K562 (cell line): ENCODE measurements at regions of chr3 and their contacts with region 1.

Region 1: DNA sequence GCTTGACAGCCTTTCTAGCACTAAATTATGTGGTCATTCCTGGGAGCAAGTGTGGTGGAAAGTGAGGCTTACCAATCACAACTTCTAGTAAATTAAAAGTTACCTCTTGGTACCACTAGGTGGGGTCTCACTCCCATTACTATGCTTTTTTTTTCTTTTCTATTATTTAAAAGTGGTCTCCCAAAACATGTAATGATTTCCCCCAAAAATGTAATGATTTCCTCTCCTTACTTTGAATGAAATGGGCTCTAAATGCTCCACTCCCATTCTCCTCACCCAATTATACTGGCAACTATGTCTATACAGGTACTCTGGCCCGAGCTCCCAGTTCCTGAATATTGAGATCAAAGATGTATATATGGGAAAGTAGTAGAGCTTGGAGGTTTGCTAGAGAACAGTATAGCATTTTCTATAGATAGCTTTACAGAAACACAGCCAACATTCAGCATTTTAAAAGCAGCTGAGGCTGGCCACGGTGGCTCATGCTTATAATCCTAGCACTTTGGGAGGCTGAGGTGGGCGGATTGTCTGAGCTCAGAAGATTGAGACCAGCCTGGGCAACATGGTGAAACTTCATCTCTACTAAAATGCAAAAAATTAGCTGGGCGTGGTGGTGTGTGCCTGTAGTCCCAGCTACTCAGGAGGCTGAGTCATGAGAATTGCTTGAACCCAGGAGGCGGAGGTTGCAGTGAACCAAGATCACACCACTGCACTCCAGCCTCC is 70.9 kb downstream of the DCUN1D1 start:
- DNase-seq: peak; percentile 33 to 45 (median 36)
- ATAC-seq: peak; percentile 54
- H3K4me3 ChIP-seq: no peak overlapping the region
- H3K27ac ChIP-seq: no peak overlapping the region
- H3K4me1 ChIP-seq: peaks cover 7 to 23% of the 10 kb centered on the region in 2 experiments
- H3K27me3 ChIP-seq: no peaks in the 10 kb centered on the region
- CTCF ChIP-seq: peak; percentile 18 to 65 (median 55); a peak in 5 of 6 replicates
- EP300 ChIP-seq: no peak
- POLR2A ChIP-seq: no peak
- RAD21 ChIP-seq: peak; percentile 35 to 63

Region 2: GRCh38 chr3:182843478-182843877 is 66.0 kb before region 1 on chr3:
- CTCF ChIA-PET with region 1: no interaction called
- POLR2A ChIA-PET with region 1: no interaction called
- in situ Hi-C with region 1: no loop called
- intact Hi-C with region 1: no loop called
- DNase-seq: no peak
- ATAC-seq: no peak
- H3K4me3 ChIP-seq: no peak overlapping the region
- H3K27ac ChIP-seq: no peak overlapping the region
- H3K4me1 ChIP-seq: no peaks in the 10 kb centered on the region
- H3K27me3 ChIP-seq: no peaks in the 10 kb centered on the region
- CTCF ChIP-seq: no peak
- EP300 ChIP-seq: no peak
- POLR2A ChIP-seq: no peak
- RAD21 ChIP-seq: no peak

Region 3: GRCh38 chr3:182920515-182921084 is 11.1 kb after region 1 on chr3:
- CTCF ChIA-PET with region 1: no interaction called
- POLR2A ChIA-PET with region 1: interaction called, 14 read pairs
- in situ Hi-C with region 1: no loop called
- intact Hi-C with region 1: no loop called
- DNase-seq: peak; percentile 70 to 96 (median 78)
- ATAC-seq: peak; percentile 97
- H3K4me3 ChIP-seq: peak overlapping the region; percentile 11; the same call in 1 of the 2 replicates
- H3K27ac ChIP-seq: peak overlapping the region; percentile 97
- H3K4me1 ChIP-seq: peaks cover 0 to 46% of the 10 kb centered on the region in 2 experiments; a peak in 4 of 5 replicates
- H3K27me3 ChIP-seq: no peaks in the 10 kb centered on the region
- CTCF ChIP-seq: no peak
- EP300 ChIP-seq: peak; percentile 93; the same call in 1 of the 2 replicates
- POLR2A ChIP-seq: peak; percentile 64
- RAD21 ChIP-seq: peak in 1 of 2 experiments; percentile 10; a peak in 1 of 4 replicates

Region 4: DNA sequence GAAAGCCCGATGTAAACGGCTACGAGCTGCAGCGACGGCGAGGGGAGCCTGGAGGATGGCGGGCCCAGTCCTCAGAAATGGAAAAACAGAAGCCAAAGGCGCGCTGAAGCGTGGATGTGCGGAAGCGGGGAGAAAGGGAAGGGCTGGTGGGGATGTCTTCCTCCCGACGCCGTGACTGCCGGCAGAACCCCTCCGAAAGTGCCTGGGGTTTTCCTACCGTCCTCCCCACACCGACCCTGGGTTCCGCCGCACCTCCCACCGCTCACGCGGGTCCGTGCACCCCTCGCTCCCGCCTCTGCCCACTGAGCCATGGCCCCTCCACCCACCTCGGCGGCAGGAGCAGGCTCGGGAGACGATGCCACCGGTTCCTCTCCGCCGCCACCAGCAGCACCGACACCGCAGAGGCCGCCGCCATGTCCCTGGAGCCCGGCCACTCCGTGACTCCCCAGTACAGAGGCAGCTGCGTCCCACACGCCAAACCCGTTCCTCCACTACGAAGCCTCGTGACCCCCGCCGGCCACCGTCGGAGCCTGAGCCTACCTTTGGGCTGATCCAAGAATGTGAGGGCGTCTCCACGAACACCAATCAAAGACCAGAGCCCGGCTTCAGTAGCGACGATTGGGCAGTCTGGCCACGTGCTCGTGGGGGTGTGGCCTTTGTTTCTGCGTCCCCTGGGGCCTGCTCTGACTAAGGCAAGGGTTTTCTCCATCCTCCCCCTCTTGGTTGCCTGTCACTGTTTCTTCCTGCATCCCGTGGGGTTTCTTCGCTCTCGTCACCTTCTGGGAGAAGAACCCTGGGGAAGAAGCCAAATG is 189.8 kb after region 1 on chr3 and contains the start of gene MCCC1:
- CTCF ChIA-PET with region 1: no interaction called
- POLR2A ChIA-PET with region 1: no interaction called
- in situ Hi-C with region 1: no loop called
- intact Hi-C with region 1: loop called (anchors 10 kb)
- DNase-seq: peak; percentile 98 to 99 (median 98)
- ATAC-seq: peak; percentile 100
- H3K4me3 ChIP-seq: peak within 1 kb of the TSS; percentile 83
- H3K27ac ChIP-seq: peak within 1 kb of the TSS; percentile 75
- H3K4me1 ChIP-seq: peaks cover 5 to 13% of the 10 kb centered on the region in 2 experiments; a peak in 4 of 5 replicates
- H3K27me3 ChIP-seq: no peaks in the 10 kb centered on the region
- CTCF ChIP-seq: no peak
- EP300 ChIP-seq: peak; percentile 30; the same call in 1 of the 2 replicates
- POLR2A ChIP-seq: peak; percentile 89
- RAD21 ChIP-seq: 0 out of 4 replicates have a peak, but pooled peaks of 1 of the 2 experiments have one; percentile 4
- polyA plus RNA-seq, gene MCCC1: 13.7 to 14.3 TPM

Region 5: GRCh38 chr3:183114384-183115178 is 205.1 kb after region 1 on chr3:
- CTCF ChIA-PET with region 1: no interaction called
- POLR2A ChIA-PET with region 1: no interaction called
- in situ Hi-C with region 1: no loop called
- intact Hi-C with region 1: loop called (anchors 1 kb)
- DNase-seq: no peak
- ATAC-seq: peak; percentile 57
- H3K4me3 ChIP-seq: no peak overlapping the region
- H3K27ac ChIP-seq: no peak overlapping the region
- H3K4me1 ChIP-seq: peaks cover 0 to 8% of the 10 kb centered on the region in 2 experiments; a peak in 4 of 5 replicates
- H3K27me3 ChIP-seq: peaks cover 10 to 25% of the 10 kb centered on the region in 2 experiments
- CTCF ChIP-seq: no peak
- EP300 ChIP-seq: no peak
- POLR2A ChIP-seq: no peak
- RAD21 ChIP-seq: 0 out of 4 replicates have a peak, but pooled peaks of 1 of the 2 experiments have one; percentile 18

Region 6: GRCh38 chr3:183178629-183179549 is 269.4 kb after region 1 on chr3:
- CTCF ChIA-PET with region 1: no interaction called
- POLR2A ChIA-PET with region 1: no interaction called
- in situ Hi-C with region 1: no loop called
- intact Hi-C with region 1: loop called (anchors 5 kb)
- DNase-seq: peak; percentile 65 to 69 (median 68)
- ATAC-seq: peak; percentile 92
- H3K4me3 ChIP-seq: peak overlapping the region; percentile 50
- H3K27ac ChIP-seq: no peak overlapping the region
- H3K4me1 ChIP-seq: peaks cover 0 to 25% of the 10 kb centered on the region in 2 experiments; a peak in 2 of 5 replicates
- H3K27me3 ChIP-seq: peaks cover 0 to 29% of the 10 kb centered on the region in 2 experiments; a peak in 3 of 5 replicates
- CTCF ChIP-seq: peak; percentile 55 to 90 (median 62); a peak in 5 of 6 replicates
- EP300 ChIP-seq: no peak
- POLR2A ChIP-seq: no peak
- RAD21 ChIP-seq: peak; percentile 47 to 58

Region 7: GRCh38 chr3:183385698-183386613 is 476.5 kb after region 1 on chr3:
- CTCF ChIA-PET with region 1: interaction called, 3 read pairs
- POLR2A ChIA-PET with region 1: no interaction called
- in situ Hi-C with region 1: no loop called
- intact Hi-C with region 1: loop called (anchors 10 kb)
- DNase-seq: peak; percentile 59 to 79 (median 60)
- ATAC-seq: peak; percentile 89
- H3K4me3 ChIP-seq: no peak overlapping the region
- H3K27ac ChIP-seq: no peak overlapping the region
- H3K4me1 ChIP-seq: peaks cover 0 to 3% of the 10 kb centered on the region in 2 experiments; a peak in 3 of 5 replicates
- H3K27me3 ChIP-seq: no peaks in the 10 kb centered on the region
- CTCF ChIP-seq: peak; percentile 75 to 85 (median 75)
- EP300 ChIP-seq: no peak
- POLR2A ChIP-seq: no peak
- RAD21 ChIP-seq: peak; percentile 88 to 92